Panc1 (cell line): ENCODE measurements at regions of chr1 and their contacts with region 1.

Region 1: DNA sequence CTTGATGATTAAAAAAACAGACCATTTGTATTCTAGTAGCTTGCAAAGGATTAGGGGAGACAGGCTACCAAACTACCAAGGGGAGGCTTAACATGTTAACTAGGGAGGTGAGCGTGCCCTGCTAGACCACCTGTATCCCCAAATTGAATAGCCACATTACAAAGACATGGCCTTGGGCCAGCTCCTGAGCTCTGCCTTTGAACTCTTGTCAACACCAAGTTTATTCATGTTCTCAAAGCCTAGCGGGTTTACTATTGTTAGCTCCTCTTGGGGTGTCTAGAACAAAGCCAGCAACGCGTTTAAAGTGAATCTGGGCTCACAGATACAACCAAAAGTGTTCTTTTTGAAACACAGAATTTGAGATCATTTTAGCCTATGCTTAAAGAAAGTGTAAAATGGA is 36.3 kb downstream of the SMYD2 start:
- DNase-seq: no peak
- ATAC-seq: no peak
- H3K4me3 ChIP-seq: no peak overlapping the region
- H3K27ac ChIP-seq: no peak overlapping the region
- H3K4me1 ChIP-seq: no peaks in the 10 kb centered on the region
- H3K27me3 ChIP-seq: no peaks in the 10 kb centered on the region
- CTCF ChIP-seq: no peak

Region 2: GRCh38 chr1:214281720-214282629 is 35.3 kb before region 1 on chr1:
- CTCF ChIA-PET with region 1: no interaction called
- POLR2A ChIA-PET with region 1: interaction called, 11 read pairs
- in situ Hi-C with region 1: no loop called
- intact Hi-C with region 1: no loop called
- DNase-seq: no peak
- ATAC-seq: peak; percentile 29
- H3K4me3 ChIP-seq: peak overlapping the region; percentile 69 to 91
- H3K27ac ChIP-seq: peak overlapping the region; percentile 41
- H3K4me1 ChIP-seq: peaks cover 12% of the 10 kb centered on the region
- H3K27me3 ChIP-seq: no peaks in the 10 kb centered on the region
- CTCF ChIP-seq: no peak